Left colon (tissue), 2 donors: ENCODE measurements at regions of chr4 and their contacts with region 1.

Region 1: GRCh38 chr4:102449751-102450352 is 51.3 kb upstream of the NFKB1 start:
- DNase-seq: peak in 1 of 2 donors; percentile 24
- ATAC-seq: peak; percentile 91

Region 2: GRCh38 chr4:101730291-101731117 is 719.3 kb before region 1 on chr4:
- intact Hi-C with region 1: no loop called
- DNase-seq: peak; percentile 51 to 73
- ATAC-seq: peak; percentile 98

Region 3: GRCh38 chr4:102610007-102610406 is 160.2 kb after region 1 on chr4:
- intact Hi-C with region 1: loop called in 1 of 2 experiments (anchors 10 kb)
- DNase-seq: no peak
- ATAC-seq: no peak

Region 4: GRCh38 chr4:103099691-103100392 is 650.0 kb after region 1 on chr4 and contains the start of gene BDH2:
- intact Hi-C with region 1: loop called in 1 of 2 experiments (anchors 10 kb)
- DNase-seq: peak; percentile 24 to 39
- ATAC-seq: peak; percentile 96
- total RNA-seq, gene BDH2: 28.6 to 35.4 TPM